Panc1 (cell line): ENCODE measurements at regions of chr1 and their contacts with region 1.

Region 1: GRCh38 chr1:24847995-24848881 is 81.8 kb downstream of the RUNX3 start:
- DNase-seq: peak; percentile 66
- ATAC-seq: peak; percentile 94
- H3K4me3 ChIP-seq: peak overlapping the region; percentile 52 to 64
- H3K27ac ChIP-seq: 0 out of 2 replicates have a peak overlapping the region, but pooled peaks have one; percentile 18
- H3K4me1 ChIP-seq: peaks cover 3% of the 10 kb centered on the region; the same call in 1 of the 2 replicates
- H3K27me3 ChIP-seq: no peaks in the 10 kb centered on the region
- CTCF ChIP-seq: peak; percentile 96

Region 2: GRCh38 chr1:24443241-24443656 is 405.0 kb before region 1 on chr1:
- CTCF ChIA-PET with region 1: no interaction called
- POLR2A ChIA-PET with region 1: no interaction called
- in situ Hi-C with region 1: no loop called
- intact Hi-C with region 1: no loop called
- DNase-seq: no peak
- ATAC-seq: no peak
- H3K4me3 ChIP-seq: no peak overlapping the region
- H3K27ac ChIP-seq: no peak overlapping the region
- H3K4me1 ChIP-seq: no peaks in the 10 kb centered on the region
- H3K27me3 ChIP-seq: no peaks in the 10 kb centered on the region
- CTCF ChIP-seq: no peak

Region 3: DNA sequence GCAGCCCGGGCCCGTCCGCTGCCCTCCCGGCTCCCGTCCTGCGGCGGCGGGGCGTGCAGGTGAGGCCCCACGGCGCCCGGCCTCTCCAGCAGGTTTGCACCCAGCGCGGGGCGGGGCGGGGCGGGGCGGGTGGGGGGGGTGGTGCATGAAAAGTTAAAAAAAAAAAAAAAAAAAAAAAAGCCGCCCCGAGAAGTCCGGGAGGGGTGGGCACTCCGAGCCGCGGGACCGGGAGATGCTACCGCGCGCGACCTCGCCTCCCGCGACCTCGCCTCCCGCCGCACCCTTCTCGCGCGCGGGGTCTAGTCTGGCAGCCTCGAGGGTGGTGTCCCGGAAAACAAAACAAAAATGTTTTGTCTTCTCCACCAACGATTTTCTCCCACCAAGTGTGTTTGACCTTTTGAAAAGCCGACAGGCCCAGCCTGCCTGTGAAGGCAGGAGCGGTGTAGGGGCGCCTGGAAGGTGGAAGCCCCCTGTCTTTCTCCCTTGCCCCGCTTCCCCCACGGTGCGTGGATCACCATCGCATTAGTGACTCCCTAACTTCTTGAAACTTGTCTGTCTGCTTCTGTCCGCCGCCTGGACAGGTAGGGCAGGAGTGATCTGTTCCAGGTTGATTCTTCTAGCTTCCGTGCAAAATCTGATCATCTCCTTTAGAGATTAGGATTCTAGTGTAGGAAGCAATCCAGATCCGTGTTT is 345.0 kb before region 1 on chr1:
- CTCF ChIA-PET with region 1: interaction called, 21 read pairs
- POLR2A ChIA-PET with region 1: no interaction called
- in situ Hi-C with region 1: no loop called
- intact Hi-C with region 1: no loop called
- DNase-seq: no peak
- ATAC-seq: no peak
- H3K4me3 ChIP-seq: peak overlapping the region; percentile 65 to 78
- H3K27ac ChIP-seq: peak overlapping the region; percentile 83
- H3K4me1 ChIP-seq: peaks cover 8% of the 10 kb centered on the region
- H3K27me3 ChIP-seq: no peaks in the 10 kb centered on the region
- CTCF ChIP-seq: no peak

Region 4: GRCh38 chr1:24929398-24930114 is 81.3 kb after region 1 on chr1:
- CTCF ChIA-PET with region 1: interaction called, 11 read pairs
- POLR2A ChIA-PET with region 1: no interaction called
- in situ Hi-C with region 1: no loop called
- intact Hi-C with region 1: no loop called
- DNase-seq: no peak
- ATAC-seq: peak; percentile 29
- H3K4me3 ChIP-seq: no peak overlapping the region
- H3K27ac ChIP-seq: no peak overlapping the region
- H3K4me1 ChIP-seq: no peaks in the 10 kb centered on the region; the same call in 1 of the 2 replicates
- H3K27me3 ChIP-seq: no peaks in the 10 kb centered on the region; the same call in 1 of the 2 replicates
- CTCF ChIP-seq: no peak

Region 5: GRCh38 chr1:25091658-25092057 is 243.4 kb after region 1 on chr1:
- CTCF ChIA-PET with region 1: no interaction called
- POLR2A ChIA-PET with region 1: no interaction called
- in situ Hi-C with region 1: no loop called
- intact Hi-C with region 1: no loop called
- DNase-seq: no peak
- ATAC-seq: no peak
- H3K4me3 ChIP-seq: no peak overlapping the region
- H3K27ac ChIP-seq: no peak overlapping the region
- H3K4me1 ChIP-seq: no peaks in the 10 kb centered on the region
- H3K27me3 ChIP-seq: no peaks in the 10 kb centered on the region
- CTCF ChIP-seq: no peak

Region 6: DNA sequence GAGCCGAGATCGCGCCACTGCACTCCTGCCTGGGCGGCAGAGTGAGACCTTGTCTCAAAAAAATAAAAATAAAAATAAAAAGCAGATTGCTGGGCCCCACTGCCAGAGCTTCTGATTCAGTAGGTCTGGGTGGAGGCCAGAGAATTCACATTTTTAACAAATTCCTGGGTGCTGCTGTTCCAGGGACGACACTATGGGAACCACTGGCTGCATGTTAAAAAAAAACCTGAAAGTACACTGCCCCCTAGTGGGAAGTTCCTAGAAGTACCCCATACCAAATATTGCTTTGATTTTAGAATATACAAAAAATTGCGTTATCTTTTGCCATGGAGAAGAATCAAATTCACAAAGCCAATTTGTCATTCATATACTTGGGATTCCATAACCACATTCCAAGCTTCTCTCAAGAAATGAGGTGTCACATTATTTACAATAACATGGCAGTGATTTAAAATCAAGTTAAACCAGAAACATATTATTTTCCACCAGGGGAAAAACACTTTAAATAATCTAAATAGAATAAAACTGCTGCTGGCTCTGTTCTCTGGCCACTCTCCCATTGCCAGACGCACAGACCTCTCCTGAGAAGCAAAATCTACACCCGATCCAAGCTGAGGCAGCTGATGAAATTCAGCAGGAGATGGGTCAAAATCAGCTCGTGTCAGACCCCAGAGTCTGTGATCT is 356.7 kb after region 1 on chr1:
- CTCF ChIA-PET with region 1: no interaction called
- POLR2A ChIA-PET with region 1: no interaction called
- in situ Hi-C with region 1: no loop called
- intact Hi-C with region 1: loop called (anchors 5 kb)
- DNase-seq: no peak
- ATAC-seq: no peak
- H3K4me3 ChIP-seq: no peak overlapping the region
- H3K27ac ChIP-seq: no peak overlapping the region
- H3K4me1 ChIP-seq: no peaks in the 10 kb centered on the region
- H3K27me3 ChIP-seq: no peaks in the 10 kb centered on the region
- CTCF ChIP-seq: peak; percentile 82